Mammary epithelial cell (primary cell): ENCODE measurements at regions of chr15 and their contacts with region 1.

Region 1: DNA sequence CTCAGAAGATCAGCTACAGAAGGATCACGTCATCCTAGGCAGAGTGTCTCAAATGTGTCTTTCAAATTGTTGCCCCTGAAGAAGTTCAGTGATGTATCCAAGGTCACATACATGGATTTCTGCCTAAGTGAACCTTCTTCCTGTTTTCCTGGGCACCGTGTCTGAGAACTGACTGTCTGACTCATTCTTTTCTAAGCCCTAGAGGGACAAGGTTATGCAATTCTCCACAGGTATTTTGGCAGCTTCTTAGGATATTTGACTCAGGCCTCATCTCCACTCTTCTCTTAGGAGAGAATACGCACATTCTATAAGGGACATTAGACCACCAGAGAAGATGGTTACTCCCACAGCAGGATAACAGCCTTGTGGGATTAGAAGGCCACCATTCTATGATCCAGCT is 392.0 kb upstream of the THBS1 start:
- DNase-seq: peak; percentile 94
- H3K4me3 ChIP-seq: no peak overlapping the region
- H3K27ac ChIP-seq: peak overlapping the region; percentile 85
- H3K4me1 ChIP-seq: peaks cover 78% of the 10 kb centered on the region
- H3K27me3 ChIP-seq: no peaks in the 10 kb centered on the region
- CTCF ChIP-seq: no peak

Region 2: DNA sequence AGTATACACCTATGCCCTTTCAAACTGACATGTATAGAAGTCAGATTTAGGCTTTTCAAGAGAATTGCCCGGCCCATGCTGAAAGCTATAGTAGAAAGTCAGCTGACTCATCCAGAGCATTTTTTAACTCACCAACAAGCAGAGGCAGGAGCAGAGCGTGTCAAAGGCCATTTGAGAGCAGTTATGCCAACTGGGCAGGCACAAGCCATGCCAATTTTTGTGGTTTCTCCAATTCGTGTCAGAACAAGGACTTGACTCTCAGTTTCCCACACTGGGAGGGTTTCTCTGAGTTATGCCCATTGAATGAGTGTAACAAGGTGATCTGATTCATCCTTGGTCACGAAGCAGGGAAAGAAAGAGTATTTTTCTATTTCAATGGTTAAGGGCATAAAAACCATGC is 11.4 kb before region 1 on chr15:
- CTCF ChIA-PET with region 1: no interaction called
- dilution Hi-C with region 1: no loop called
- in situ Hi-C with region 1: no loop called
- intact Hi-C with region 1: loop called (anchors 1 kb)
- DNase-seq: peak; percentile 100
- H3K4me3 ChIP-seq: no peak overlapping the region
- H3K27ac ChIP-seq: peak overlapping the region; percentile 96
- H3K4me1 ChIP-seq: peaks cover 67% of the 10 kb centered on the region
- H3K27me3 ChIP-seq: no peaks in the 10 kb centered on the region
- CTCF ChIP-seq: no peak

Region 3: DNA sequence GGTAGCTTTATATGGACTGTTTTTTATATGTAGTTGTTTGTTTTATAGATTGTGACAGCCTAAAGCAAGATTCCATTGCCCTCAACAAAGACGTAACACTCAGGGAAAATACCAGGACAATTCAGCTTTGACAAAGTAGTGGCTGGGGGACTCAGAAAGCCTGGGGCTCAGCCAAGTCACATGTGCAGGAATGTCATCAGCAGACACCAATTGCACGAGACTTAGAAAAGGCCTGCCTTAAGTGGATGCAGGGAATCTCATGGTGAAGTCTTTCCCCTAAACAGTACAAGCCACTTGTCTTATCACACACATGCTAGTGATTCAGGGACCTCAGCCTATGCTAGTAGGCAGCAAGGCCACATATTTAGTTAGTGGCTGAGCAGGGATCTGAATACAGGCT is 10.2 kb after region 1 on chr15:
- CTCF ChIA-PET with region 1: no interaction called
- dilution Hi-C with region 1: no loop called
- in situ Hi-C with region 1: no loop called
- intact Hi-C with region 1: no loop called
- DNase-seq: no peak
- H3K4me3 ChIP-seq: no peak overlapping the region
- H3K27ac ChIP-seq: peak overlapping the region; percentile 79
- H3K4me1 ChIP-seq: peaks cover 72% of the 10 kb centered on the region
- H3K27me3 ChIP-seq: no peaks in the 10 kb centered on the region
- CTCF ChIP-seq: no peak